Activated naive CD8-positive, alpha-beta T cell treated with anti-CD3 and anti-CD28 coated beads, Interleukin-2, amount 10 ng/mL, durations not matched to agents 7 days and 5 days (primary cell): ENCODE measurements at regions of chr1 and their contacts with region 1.

Region 1: GRCh38 chr1:25031966-25032667 is 102.0 kb upstream of the RUNX3 start:
- DNase-seq: peak; percentile 59
- ATAC-seq: peak; percentile 43
- H3K4me3 Mint-ChIP-seq: peak overlapping the region; percentile 88
- H3K27ac Mint-ChIP-seq: no peak overlapping the region
- H3K4me1 Mint-ChIP-seq: peaks cover 74% of the 10 kb centered on the region
- H3K27me3 Mint-ChIP-seq: no peaks in the 10 kb centered on the region

Region 2: DNA sequence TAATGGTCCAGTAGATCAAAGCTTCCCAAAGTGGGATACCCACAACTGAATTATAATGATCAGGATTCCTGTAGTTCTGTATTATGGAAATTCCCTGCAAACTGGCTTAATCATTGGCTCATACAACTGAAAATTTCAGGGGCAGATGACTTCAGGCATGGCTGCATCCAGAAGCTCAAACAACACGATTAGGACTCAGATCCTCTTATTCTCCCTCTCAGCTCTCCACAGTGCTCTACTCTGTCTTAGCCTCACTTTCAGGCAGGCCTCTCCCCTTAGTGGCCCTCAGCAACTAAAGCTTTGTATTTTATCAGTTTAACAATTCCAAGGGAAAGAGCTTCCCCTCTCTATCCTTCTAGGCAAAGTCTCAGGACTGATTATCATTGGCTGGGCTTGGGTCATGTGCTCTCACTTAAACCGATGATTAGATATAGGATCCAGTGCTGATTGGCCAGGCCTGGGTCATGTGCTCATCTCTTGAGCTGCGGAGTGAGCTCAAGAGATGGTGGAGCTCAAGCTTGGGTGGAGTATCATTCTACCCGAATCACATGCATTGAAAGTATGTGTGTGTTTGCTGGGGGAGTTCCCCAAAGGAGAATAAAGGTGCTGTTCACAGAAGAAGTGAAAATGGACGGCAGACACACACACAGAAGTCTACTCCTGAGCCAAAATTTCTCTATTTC is 44.1 kb before region 1 on chr1:
- POLR2A ChIA-PET with region 1: interaction called, 17 read pairs
- DNase-seq: peak; percentile 29
- ATAC-seq: peak; percentile 44
- H3K4me3 Mint-ChIP-seq: peak overlapping the region; percentile 50
- H3K27ac Mint-ChIP-seq: peak overlapping the region; percentile 87
- H3K4me1 Mint-ChIP-seq: peaks cover 92% of the 10 kb centered on the region
- H3K27me3 Mint-ChIP-seq: no peaks in the 10 kb centered on the region

Region 3: DNA sequence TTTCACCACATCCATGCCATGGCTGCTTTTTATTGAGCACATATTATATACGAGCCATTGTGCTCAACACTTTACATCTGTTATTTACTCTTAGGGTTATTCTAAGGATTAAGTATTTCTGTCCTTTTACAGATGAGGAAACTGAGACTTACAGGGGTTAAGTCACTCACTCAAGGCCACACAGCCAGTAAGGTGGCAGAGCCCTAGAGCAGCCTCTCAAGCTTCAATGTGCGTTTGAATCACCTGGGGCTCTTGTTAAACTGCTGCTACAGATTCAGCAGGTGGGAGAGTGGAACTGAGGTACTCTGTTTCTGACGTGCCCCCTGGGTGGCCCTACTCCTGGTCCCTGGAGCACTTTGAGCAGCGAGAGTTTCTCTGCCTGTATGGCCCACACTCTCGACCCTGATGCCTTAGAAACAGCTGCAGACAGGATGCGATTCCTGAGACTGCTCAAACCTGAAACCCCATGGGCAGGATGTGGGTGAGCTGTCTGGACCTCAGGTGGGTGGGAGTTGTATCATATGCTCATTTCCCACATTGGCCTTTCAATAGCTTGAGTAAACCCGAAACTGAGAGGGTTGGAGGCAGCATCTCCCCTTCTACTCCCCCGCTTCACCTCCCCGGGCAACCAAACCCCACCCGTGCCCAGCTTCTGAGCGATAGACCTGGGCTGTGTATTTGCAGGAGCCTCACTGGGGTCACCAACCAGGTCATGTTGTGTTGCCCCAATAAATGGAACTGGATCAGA is 643.8 kb after region 1 on chr1:
- POLR2A ChIA-PET with region 1: no interaction called
- DNase-seq: peak; percentile 87
- ATAC-seq: peak; percentile 89
- H3K4me3 Mint-ChIP-seq: peak overlapping the region; percentile 74
- H3K27ac Mint-ChIP-seq: peak overlapping the region; percentile 39
- H3K4me1 Mint-ChIP-seq: peaks cover 62% of the 10 kb centered on the region
- H3K27me3 Mint-ChIP-seq: peaks cover 34% of the 10 kb centered on the region